Activated B cell treated with CpG ODN at 0.5 μM for 24 hours (primary cell): ENCODE measurements at regions of chr21 and their contacts with region 1.

Region 1: GRCh38 chr21:31326522-31327242 is 17.4 kb downstream of the TIAM1 start:
- DNase-seq: peak; percentile 25
- ATAC-seq: peak; percentile 94
- H3K4me3 Mint-ChIP-seq: peak overlapping the region; percentile 61
- H3K27ac Mint-ChIP-seq: peak overlapping the region; percentile 77
- H3K4me1 Mint-ChIP-seq: peaks cover 24% of the 10 kb centered on the region
- H3K27me3 Mint-ChIP-seq: no peaks in the 10 kb centered on the region
- CTCF ChIP-seq: no peak

Region 2: GRCh38 chr21:31198575-31198974 is 128.1 kb before region 1 on chr21:
- CTCF ChIA-PET with region 1: no interaction called
- POLR2A ChIA-PET with region 1: no interaction called
- intact Hi-C with region 1: loop called (anchors 2 kb)
- DNase-seq: no peak
- ATAC-seq: no peak
- H3K4me3 Mint-ChIP-seq: no peak overlapping the region
- H3K27ac Mint-ChIP-seq: no peak overlapping the region
- H3K4me1 Mint-ChIP-seq: peaks cover 17% of the 10 kb centered on the region
- H3K27me3 Mint-ChIP-seq: no peaks in the 10 kb centered on the region
- CTCF ChIP-seq: peak; percentile 17

Region 3: GRCh38 chr21:31558962-31559367 is 232.3 kb after region 1 on chr21:
- CTCF ChIA-PET with region 1: no interaction called
- POLR2A ChIA-PET with region 1: interaction called, 20 read pairs
- intact Hi-C with region 1: loop called (anchors 1 kb)
- DNase-seq: peak; percentile 80
- ATAC-seq: peak; percentile 90
- H3K4me3 Mint-ChIP-seq: peak overlapping the region; percentile 93
- H3K27ac Mint-ChIP-seq: no peak overlapping the region
- H3K4me1 Mint-ChIP-seq: peaks cover 24% of the 10 kb centered on the region
- H3K27me3 Mint-ChIP-seq: peaks cover 30% of the 10 kb centered on the region
- CTCF ChIP-seq: no peak

Region 4: DNA sequence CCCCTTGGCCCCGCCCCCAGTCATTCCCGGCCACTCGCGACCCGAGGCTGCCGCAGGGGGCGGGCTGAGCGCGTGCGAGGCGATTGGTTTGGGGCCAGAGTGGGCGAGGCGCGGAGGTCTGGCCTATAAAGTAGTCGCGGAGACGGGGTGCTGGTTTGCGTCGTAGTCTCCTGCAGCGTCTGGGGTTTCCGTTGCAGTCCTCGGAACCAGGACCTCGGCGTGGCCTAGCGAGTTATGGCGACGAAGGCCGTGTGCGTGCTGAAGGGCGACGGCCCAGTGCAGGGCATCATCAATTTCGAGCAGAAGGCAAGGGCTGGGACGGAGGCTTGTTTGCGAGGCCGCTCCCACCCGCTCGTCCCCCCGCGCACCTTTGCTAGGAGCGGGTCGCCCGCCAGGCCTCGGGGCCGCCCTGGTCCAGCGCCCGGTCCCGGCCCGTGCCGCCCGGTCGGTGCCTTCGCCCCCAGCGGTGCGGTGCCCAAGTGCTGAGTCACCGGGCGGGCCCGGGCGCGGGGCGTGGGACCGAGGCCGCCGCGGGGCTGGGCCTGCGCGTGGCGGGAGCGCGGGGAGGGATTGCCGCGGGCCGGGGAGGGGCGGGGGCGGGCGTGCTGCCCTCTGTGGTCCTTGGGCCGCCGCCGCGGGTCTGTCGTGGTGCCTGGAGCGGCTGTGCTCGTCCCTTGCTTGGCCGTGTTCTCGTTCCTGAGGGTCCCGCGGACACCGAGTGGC is 333.0 kb after region 1 on chr21 and contains the start of gene SOD1:
- CTCF ChIA-PET with region 1: no interaction called
- POLR2A ChIA-PET with region 1: no interaction called
- intact Hi-C with region 1: loop called (anchors 1 kb)
- DNase-seq: peak; percentile 93
- ATAC-seq: peak; percentile 97
- H3K4me3 Mint-ChIP-seq: peak within 1 kb of the TSS; percentile 99
- H3K27ac Mint-ChIP-seq: peak within 1 kb of the TSS; percentile 96
- H3K4me1 Mint-ChIP-seq: peaks cover 65% of the 10 kb centered on the region
- H3K27me3 Mint-ChIP-seq: no peaks in the 10 kb centered on the region
- CTCF ChIP-seq: no peak
- total RNA-seq, gene SOD1: 107 and 131 TPM in 2 replicates

Region 5: DNA sequence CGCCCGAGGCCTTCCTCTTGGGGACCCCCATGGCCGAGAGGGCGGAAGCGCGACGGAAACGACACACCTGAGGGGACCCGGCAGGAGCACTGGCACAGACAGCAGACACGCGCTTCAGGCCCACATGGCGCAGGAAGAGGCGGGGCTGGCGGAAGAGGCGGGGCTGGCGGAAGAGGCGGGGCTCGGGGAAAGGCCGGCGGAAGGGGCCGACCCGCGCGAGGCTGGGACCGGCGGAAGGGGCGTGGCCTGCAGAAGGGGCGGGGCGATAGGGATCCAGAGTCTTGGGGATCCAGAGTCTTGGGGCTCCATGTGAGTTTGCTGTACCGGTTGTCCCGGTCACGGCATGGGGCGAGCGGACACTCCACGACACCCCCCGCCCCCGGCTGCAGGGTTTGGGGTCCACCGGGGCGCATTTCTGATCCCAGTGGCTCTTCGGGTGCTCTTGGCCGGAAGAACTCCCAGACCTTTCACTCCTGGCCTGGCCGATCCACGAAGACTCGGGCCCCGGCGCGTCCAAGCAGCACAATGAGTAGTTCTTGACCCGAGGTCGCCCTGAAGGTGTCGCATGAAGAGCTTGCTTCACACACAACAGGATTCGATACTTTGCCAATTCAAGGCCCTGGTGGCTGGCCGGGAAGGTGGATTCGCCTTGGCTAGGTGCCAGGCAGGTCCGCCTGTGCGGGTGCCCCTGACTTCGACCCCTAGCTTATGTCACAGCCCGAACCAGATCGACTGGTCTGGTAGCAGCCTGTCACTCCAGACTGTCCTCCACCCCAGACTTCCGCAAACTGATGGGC is 1066.4 kb after region 1 on chr21 and contains the start of gene URB1:
- CTCF ChIA-PET with region 1: no interaction called
- POLR2A ChIA-PET with region 1: no interaction called
- intact Hi-C with region 1: loop called (anchors 2 kb)
- DNase-seq: peak; percentile 97
- ATAC-seq: peak; percentile 97
- H3K4me3 Mint-ChIP-seq: peak within 1 kb of the TSS; percentile 87
- H3K27ac Mint-ChIP-seq: peak within 1 kb of the TSS; percentile 83
- H3K4me1 Mint-ChIP-seq: peaks cover 41% of the 10 kb centered on the region
- H3K27me3 Mint-ChIP-seq: peaks cover 6% of the 10 kb centered on the region
- CTCF ChIP-seq: no peak
- total RNA-seq, gene URB1: 18.1 and 22.2 TPM in 2 replicates